CD14-positive monocyte (primary cell): ENCODE measurements at regions of chr9 and their contacts with region 1.

Region 1: GRCh38 chr9:133238851-133239532 is 29.9 kb upstream of the OBP2B start:
- DNase-seq: peak; percentile 46 to 59 (median 50)
- H3K4me3 ChIP-seq: peak overlapping the region in 2 of 3 experiments; percentile 10 to 54
- H3K4me3 Mint-ChIP-seq: peak overlapping the region; percentile 58 to 60
- H3K27ac ChIP-seq: no peak overlapping the region
- H3K27ac Mint-ChIP-seq: peak overlapping the region in 1 of 7 donors; percentile 41
- H3K4me1 ChIP-seq: peaks cover 9 to 12% of the 10 kb centered on the region in 2 donors
- H3K4me1 Mint-ChIP-seq: peaks cover 13% of the 10 kb centered on the region
- H3K27me3 ChIP-seq: peaks cover 0 to 4% of the 10 kb centered on the region in 2 donors
- H3K27me3 Mint-ChIP-seq: peaks cover 8 to 25% (median 11%) of the 10 kb centered on the region in 3 donors
- CTCF ChIP-seq: peak; percentile 76

Region 2: DNA sequence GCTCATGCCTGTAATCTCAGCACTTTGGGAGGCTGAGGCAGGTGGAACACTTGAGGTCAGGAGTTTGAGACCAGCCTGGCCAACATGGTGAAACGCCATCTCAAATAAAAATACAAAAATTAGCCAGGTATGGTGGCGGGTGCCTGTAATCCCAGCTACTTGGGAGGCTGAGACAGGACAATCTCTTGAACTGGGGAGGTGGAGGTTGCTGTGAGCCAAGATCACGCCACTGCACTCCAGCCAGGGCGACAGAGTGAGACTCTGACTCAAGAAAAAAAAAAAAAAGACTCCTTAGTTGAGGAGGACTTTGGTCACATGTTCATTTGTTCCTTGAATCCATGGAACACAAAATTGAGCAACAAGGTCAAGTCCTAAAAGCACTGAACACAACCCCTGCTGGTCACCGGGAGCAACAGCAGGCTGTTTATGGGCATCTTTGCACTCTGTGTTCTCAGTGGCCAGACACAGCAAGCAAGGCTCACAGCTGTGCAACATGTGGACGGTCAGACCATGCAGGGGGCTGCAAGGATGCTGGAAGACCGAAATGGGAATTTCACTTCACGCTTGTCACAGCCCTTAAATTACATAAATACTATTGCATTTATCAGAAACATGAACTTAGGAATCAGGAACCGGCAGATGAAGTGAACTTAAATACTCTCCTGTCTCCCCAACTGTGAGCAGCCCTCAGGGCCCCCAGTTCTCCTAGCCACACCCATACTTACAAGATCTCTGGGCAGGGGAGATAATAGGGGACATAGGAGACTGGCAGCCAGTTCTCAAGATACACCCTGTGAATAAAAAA is 78.0 kb before region 1 on chr9:
- intact Hi-C with region 1: no loop called
- DNase-seq: peak; percentile 73 to 90 (median 83)
- H3K4me3 ChIP-seq: no peak overlapping the region
- H3K4me3 Mint-ChIP-seq: peak overlapping the region; percentile 50 to 65
- H3K27ac ChIP-seq: no peak overlapping the region
- H3K27ac Mint-ChIP-seq: peak overlapping the region in 2 of 7 donors; percentile 50 to 77
- H3K4me1 ChIP-seq: peaks cover 32 to 38% of the 10 kb centered on the region in 2 donors
- H3K4me1 Mint-ChIP-seq: peaks cover 30% of the 10 kb centered on the region
- H3K27me3 ChIP-seq: peaks cover 0 to 6% of the 10 kb centered on the region in 2 donors
- H3K27me3 Mint-ChIP-seq: peaks cover 0 to 21% (median 10%) of the 10 kb centered on the region in 3 donors
- CTCF ChIP-seq: peak; percentile 91

Region 3: DNA sequence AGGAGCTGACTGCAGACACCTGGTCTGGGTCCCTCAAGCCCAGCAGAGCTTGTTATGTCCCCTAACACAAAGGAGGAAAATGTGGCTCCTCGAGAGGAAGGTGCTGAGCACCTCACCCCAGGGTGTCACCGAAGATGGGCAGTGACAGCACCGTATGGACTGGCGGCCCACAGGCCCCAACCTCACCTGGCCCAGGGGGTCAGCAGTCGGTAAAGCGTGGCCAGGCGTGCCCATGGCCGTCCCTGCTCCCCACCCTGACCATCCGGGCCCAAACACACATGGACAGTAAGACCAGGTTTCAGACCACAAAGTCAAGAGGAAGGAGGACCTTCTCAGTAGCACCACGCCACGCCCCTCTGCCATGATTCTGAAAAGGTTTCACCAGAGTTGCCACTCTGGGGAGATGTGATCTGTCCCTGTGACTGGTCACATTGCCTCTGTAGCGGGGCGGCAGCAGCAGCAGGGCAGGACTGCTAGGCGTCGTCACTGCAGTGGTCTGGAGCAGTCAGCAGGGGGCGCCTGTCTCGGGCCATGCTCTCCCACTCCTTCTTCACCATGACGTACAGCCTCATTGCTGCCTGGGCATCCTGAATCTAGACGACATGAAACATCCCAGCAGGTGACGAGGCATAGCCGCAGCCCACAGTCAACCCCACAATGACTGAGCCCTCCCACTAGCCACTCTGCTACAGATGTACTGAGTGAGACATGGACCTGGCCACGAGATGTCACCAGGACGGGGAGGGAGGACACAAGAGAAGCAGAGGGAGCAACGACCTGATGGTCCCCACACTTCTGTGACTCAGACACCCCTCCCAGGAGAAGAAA is 167.7 kb after region 1 on chr9:
- intact Hi-C with region 1: loop called in 1 of 2 experiments (anchors 10 kb)
- DNase-seq: peak; percentile 61 to 75 (median 73)
- H3K4me3 ChIP-seq: no peak overlapping the region
- H3K4me3 Mint-ChIP-seq: no peak overlapping the region
- H3K27ac ChIP-seq: peak overlapping the region in 1 of 2 donors; percentile 48
- H3K27ac Mint-ChIP-seq: peak overlapping the region in 3 of 7 donors; percentile 26 to 75 (median 37)
- H3K4me1 ChIP-seq: no peaks in the 10 kb centered on the region
- H3K4me1 Mint-ChIP-seq: no peaks in the 10 kb centered on the region
- H3K27me3 ChIP-seq: no peaks in the 10 kb centered on the region
- H3K27me3 Mint-ChIP-seq: peaks cover 0 to 3% (median 3%) of the 10 kb centered on the region in 3 donors
- CTCF ChIP-seq: peak; percentile 94